Dendritic cell treated with granulocyte-macrophage colony-stimulating factor and Interleukin-4, amounts not matched to agents 40 ng/mL and 50 ng/mL, for 4 days (primary cell): ENCODE measurements at regions of chr7 and their contacts with region 1.

Region 1: DNA sequence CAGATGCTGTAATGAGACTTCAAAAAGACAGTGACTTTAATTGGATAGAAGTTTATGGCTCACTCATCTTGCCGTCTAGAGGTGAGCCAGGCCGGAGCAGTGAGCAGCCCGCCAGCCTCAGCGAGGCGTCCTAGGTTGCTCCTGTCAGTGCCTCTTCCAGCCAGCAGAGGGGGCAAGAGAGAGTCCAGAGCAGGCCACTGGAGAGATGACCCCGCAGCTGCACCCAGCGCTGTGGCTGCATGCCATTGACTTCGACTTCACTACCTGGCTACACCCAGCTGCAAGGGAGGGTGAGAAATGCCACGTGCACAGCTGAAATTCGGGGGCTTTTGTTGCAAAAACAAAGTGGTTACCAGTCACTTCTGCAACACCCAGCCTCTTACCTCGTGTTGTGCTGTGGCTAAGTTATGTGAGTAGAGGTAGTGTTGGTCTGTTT is 26.5 kb downstream of the NUB1 start:
- H3K4me3 Mint-ChIP-seq: no peak overlapping the region
- H3K27ac Mint-ChIP-seq: no peak overlapping the region
- H3K4me1 Mint-ChIP-seq: peaks cover 5% of the 10 kb centered on the region
- H3K27me3 Mint-ChIP-seq: no peaks in the 10 kb centered on the region

Region 2: DNA sequence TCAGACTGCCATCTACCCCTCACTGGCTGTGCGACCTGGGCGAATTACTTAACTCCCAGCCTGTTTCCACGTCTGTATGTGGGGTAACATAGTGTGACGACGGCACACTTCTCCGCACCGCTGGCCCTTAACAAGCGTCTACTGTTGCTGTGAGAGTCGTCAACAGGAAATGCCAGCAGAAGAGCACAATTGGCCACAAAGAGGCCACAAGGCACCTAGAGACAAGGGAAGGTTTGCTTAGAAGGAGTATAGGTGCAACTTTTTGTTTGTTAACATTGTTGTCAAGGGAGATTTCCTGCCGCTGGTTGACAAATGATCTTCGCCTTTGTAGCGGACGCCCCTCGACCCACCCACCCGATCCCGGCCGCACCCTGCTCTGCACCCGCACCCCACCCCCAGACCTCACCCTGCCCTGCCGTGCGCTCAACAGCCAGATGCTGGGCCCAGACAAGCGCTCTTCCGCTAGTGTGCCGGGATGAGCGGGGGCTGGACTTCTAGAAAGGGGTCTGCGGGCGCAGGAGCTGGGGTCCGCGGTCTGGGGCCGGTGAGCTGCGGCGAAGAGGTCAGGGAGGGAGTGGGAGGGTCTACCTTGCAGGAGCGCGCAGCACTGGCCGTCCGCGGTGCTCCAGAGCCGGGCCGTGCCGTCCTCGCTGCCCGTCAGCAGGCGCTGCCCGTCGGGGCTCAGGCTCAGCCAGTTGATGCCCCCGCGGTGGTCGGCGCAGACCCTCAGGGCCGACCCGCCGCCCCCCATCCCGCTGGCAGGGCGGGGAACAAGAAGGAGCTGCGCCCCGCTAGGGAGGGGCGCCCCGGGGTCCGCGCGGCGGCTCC is 40.9 kb after region 1 on chr7:
- intact Hi-C with region 1: no loop called
- H3K4me3 Mint-ChIP-seq: peak overlapping the region; percentile 2
- H3K27ac Mint-ChIP-seq: no peak overlapping the region
- H3K4me1 Mint-ChIP-seq: peaks cover 52% of the 10 kb centered on the region
- H3K27me3 Mint-ChIP-seq: peaks cover 80% of the 10 kb centered on the region

Region 3: DNA sequence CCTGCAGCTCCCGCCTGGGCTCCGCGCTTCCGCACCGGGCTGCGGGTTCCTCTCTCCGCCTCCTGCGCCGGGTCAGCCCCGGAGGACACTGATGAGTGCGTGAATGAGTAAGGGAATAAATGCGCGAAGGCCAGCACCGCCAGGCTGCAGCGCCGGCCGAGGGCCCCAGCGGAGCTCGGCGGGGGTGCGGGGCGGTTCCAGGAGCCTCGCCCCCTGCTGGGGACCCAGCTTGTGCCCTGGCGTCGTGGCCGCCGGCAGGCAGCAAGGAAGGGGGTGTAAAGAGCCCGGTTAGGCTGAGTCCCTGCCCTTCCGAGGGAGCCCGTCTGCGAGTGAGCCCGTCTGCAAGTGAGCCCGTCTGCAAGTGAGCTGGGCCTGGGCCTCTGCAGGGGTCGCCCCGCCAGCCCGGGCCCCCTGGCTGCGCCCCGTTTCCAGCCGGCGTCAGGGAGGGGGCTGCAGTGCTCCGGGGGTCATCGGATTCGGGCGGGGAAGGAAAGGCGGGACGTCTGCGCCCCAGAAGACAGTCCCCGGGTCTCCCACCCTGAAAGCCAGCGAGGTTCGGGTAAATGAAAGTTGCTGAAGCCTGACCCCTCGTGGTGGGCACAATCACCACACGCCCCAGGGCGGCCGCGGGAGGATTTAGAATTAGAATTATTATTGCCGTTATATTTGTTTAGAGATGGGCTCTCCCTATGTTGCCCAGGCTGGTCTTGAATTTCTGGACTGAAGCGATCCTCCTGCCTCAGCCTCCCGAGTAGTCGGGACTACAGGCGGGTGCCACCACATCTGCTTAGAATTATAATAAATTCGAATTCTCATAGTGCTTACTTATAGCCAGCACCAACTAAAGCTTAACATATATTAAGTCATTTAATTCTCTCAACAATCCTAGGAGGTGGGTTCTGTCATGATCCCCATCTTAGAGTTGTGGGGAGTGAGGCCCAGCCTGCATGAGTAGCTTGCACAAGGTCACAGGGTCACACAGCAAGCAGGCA is 80.4 kb after region 1 on chr7:
- intact Hi-C with region 1: loop called (anchors 1 kb)
- H3K4me3 Mint-ChIP-seq: peak overlapping the region; percentile 75
- H3K27ac Mint-ChIP-seq: peak overlapping the region; percentile 40
- H3K4me1 Mint-ChIP-seq: no peaks in the 10 kb centered on the region
- H3K27me3 Mint-ChIP-seq: peaks cover 41% of the 10 kb centered on the region